Activated T-helper 2 cell treated with anti-CD3 and anti-CD28 coated beads, Interferon-gamma antibody, Interleukin-2, Interleukin-4, amounts not matched to agents 10 μg/mL and 5 μg/mL and 100 μg/mL, durations not matched to agents 14 hours and 24 hours and 36 hours (primary cell): ENCODE measurements at regions of chr2 and their contacts with region 1.

Region 1: DNA sequence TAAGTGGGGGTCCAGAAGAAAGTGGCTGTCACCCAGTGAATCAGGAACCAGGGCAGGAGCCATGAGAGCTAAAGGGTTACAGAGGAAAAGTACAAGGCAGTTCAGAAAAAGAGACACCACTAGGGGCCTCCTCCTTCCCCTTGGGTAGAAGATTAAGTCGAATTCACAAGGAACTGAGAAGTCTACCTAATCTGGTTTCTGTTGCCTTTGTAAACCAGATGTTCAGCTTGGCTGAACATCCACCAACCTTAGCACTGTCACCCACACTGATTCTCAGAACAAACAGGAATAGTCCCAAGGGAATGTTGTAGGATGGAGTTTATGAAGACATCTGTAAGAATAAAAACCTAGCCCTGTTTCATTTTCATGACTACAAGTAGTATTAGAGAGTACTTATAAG is 90.4 kb upstream of the NOSTRIN start:
- DNase-seq: no peak
- H3K4me3 Mint-ChIP-seq: no peak overlapping the region
- H3K27ac Mint-ChIP-seq: no peak overlapping the region
- H3K4me1 Mint-ChIP-seq: peaks cover under 1% of the 10 kb centered on the region
- H3K27me3 Mint-ChIP-seq: no peaks in the 10 kb centered on the region

Region 2: GRCh38 chr2:168751104-168751740 is 39.2 kb after region 1 on chr2:
- intact Hi-C with region 1: loop called (anchors 2 kb)
- DNase-seq: peak; percentile 9
- H3K4me3 Mint-ChIP-seq: no peak overlapping the region
- H3K27ac Mint-ChIP-seq: no peak overlapping the region
- H3K4me1 Mint-ChIP-seq: peaks cover 20% of the 10 kb centered on the region
- H3K27me3 Mint-ChIP-seq: no peaks in the 10 kb centered on the region

Region 3: GRCh38 chr2:168912901-168913369 is 200.9 kb after region 1 on chr2:
- intact Hi-C with region 1: loop called (anchors 10 kb)
- DNase-seq: no peak
- H3K4me3 Mint-ChIP-seq: peak overlapping the region; percentile 45
- H3K27ac Mint-ChIP-seq: no peak overlapping the region
- H3K4me1 Mint-ChIP-seq: peaks cover 16% of the 10 kb centered on the region
- H3K27me3 Mint-ChIP-seq: peaks cover 50% of the 10 kb centered on the region